Astrocyte of the cerebellum (primary cell): ENCODE measurements at regions of chr9 and their contacts with region 1.

Region 1: DNA sequence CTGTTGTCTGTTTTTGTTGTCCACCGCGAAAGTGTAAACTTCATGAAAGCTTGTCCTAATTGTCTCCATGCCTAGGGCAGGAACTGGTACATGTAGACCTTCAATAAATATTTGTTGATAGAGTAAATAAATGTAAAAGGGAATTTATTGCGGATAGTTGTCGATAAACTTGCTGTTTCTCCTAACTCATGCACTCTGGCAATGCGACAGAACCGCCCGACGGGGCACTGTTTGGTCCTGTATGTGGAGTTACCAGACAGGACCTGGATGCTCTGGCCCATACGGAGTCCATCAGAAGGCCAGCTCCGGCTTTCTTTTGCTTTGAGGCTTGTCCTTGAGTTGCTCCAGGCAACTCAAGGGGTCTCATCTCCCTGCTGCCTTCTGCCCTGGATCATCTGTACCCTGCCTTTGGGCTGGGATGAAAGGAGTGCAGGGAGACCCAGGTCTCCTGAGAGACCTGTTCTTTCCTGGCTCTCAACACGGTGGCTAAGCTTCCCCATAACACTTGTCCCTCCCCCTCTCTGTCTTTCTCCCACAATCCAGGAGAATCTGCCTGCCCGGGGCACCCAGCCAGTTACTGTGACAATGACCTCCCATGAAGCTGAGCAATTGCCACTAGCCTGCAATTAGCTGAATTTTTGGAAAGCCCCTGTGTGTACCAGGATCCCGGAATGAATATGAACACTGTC is 149.5 kb upstream of the PTCH1 start:
- DNase-seq: no peak
- H3K4me3 ChIP-seq: no peak overlapping the region
- CTCF ChIP-seq: no peak

Region 2: DNA sequence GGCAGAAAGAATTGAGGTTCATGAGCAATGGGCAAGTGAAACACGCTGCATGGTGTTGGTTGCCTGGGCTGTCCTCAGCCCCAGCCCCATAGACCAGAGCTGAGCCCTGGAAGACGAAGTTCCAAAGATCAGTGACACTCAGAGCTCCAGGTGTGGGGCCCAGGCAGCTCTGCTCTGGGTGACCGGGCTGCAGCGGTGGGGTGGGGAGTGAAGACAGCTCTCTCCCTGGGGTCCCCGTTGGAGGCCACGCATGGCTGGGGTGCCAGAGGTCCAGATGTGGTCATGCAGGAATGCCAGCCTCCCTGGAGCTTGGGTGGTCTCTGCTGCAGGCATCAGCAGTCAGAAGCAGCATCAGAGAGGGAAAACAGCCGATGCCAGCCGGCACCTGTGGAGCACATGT is 44.2 kb after region 1 on chr9:
- in situ Hi-C with region 1: no loop called
- DNase-seq: no peak
- H3K4me3 ChIP-seq: no peak overlapping the region
- CTCF ChIP-seq: no peak

Region 3: DNA sequence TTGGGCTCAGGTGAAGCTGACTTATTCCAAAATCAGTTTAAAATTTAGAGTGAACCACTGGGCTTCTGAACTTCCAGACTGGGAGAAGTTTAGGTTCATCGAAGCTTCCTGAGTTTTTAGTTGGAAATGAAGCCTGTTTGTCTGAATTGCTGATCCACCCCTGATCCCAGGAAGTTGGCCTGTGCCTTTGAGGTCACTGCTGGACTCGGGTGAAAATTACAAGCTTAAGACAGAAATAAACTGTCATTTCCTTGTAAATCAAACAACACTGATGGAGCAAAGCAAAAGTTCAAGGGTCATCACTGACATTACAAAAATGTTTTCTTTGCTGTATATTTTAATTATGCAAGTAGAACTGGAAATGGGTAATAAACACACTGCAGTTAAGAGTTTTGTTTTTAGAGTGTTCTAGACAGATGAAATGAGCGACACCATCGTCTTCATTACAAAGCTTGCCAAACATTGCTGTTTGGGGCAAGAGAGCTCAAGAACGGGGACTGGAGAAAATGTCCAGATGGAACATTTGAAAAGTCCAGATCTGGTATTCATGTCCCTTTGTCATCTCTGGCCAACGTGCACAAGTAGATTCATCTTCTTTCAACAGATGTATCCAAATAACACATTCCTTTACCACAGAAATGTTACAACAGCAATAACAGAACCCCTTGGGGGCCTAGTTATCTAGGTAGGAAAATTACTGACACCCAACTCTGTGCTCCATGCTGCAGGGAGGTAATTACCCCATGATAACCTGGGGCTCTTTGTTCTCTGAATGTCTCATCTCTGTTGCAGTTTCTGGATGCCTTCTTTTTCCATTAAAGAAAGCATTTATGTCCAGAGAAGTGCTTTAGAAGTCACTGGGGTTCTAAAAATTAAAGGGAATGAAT is 66.8 kb after region 1 on chr9:
- in situ Hi-C with region 1: loop called (anchors 5 kb)
- DNase-seq: no peak
- H3K4me3 ChIP-seq: no peak overlapping the region
- CTCF ChIP-seq: no peak

Region 4: GRCh38 chr9:95750725-95751517 is 84.7 kb after region 1 on chr9:
- in situ Hi-C with region 1: no loop called
- DNase-seq: no peak
- H3K4me3 ChIP-seq: no peak overlapping the region
- CTCF ChIP-seq: no peak